Prostate gland (tissue), 2 donors: ENCODE measurements at regions of chr22 and their contacts with region 1.

Region 1: GRCh38 chr22:40024201-40025061 is 29.7 kb downstream of the FAM83F start:
- DNase-seq: peak; percentile 69
- H3K4me3 ChIP-seq: no peak overlapping the region
- H3K27ac ChIP-seq: no peak overlapping the region
- H3K4me1 ChIP-seq: peaks cover 22% of the 10 kb centered on the region
- H3K27me3 ChIP-seq: no peaks in the 10 kb centered on the region
- CTCF ChIP-seq: peak; percentile 73 to 91 (median 86)
- POLR2A ChIP-seq: no peak

Region 2: GRCh38 chr22:39559454-39560105 is 464.9 kb before region 1 on chr22:
- intact Hi-C with region 1: loop called (anchors 5 kb)
- DNase-seq: no peak
- H3K4me3 ChIP-seq: no peak overlapping the region
- H3K27ac ChIP-seq: no peak overlapping the region
- H3K4me1 ChIP-seq: no peaks in the 10 kb centered on the region
- H3K27me3 ChIP-seq: no peaks in the 10 kb centered on the region
- CTCF ChIP-seq: peak in 3 of 4 experiments; percentile 8 to 10 (median 9)
- POLR2A ChIP-seq: no peak

Region 3: GRCh38 chr22:39622881-39623367 is 401.5 kb before region 1 on chr22:
- intact Hi-C with region 1: loop called (anchors 5 kb)
- DNase-seq: no peak
- H3K4me3 ChIP-seq: no peak overlapping the region
- H3K27ac ChIP-seq: no peak overlapping the region
- H3K4me1 ChIP-seq: no peaks in the 10 kb centered on the region
- H3K27me3 ChIP-seq: peaks cover 5% of the 10 kb centered on the region
- CTCF ChIP-seq: peak in 3 of 4 experiments; percentile 39 to 48 (median 45)
- POLR2A ChIP-seq: no peak

Region 4: DNA sequence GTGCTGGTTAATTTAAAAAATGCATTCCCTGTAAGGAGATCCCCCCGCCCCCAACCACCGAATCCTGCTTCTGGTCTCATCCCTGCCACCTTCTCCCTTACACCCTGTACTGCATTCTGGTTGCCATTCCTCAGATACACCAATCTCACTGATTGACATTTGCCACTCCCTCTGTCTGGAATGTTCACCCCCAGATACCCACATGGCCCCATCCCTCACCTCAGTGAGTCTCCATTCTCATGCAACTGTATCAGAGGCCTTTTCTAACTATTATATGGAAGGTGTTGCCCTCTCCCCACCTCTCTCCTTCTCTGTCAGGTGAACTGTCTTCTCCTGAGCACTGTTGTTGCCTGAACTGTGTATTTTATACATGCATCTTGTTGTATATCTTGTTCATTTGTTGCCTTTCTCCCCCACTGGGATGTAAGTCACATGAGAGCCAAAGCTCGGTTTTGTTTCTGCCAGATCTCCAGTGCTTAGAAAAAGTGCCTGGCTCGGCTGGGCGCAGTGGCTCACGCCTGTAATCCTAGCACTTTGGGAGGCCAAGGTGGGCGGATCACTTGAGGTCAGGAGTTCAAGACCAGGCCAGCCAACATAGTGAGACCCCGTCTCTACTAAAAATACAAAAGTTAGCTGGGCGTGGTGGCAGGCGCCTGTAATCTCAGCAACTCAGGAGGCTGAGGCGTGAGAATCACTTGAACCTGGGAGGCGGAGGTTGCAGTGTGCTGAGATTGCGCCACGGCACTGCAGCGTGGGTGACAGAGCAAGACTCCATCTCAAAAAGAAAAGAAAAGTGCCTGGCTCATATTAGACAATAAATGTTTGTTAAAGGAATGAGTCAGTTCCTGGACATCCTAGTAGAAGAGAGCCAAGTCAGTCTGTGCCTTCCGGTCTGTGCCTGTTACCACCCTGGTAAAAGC is 214.3 kb after region 1 on chr22:
- intact Hi-C with region 1: no loop called
- DNase-seq: peak; percentile 48
- H3K4me3 ChIP-seq: no peak overlapping the region
- H3K27ac ChIP-seq: peak overlapping the region; percentile 28 to 39
- H3K4me1 ChIP-seq: no peaks in the 10 kb centered on the region
- H3K27me3 ChIP-seq: no peaks in the 10 kb centered on the region
- CTCF ChIP-seq: no peak
- POLR2A ChIP-seq: no peak